Spleen (tissue), 13 donors: ENCODE measurements at regions of chr3 and their contacts with region 1.

Region 1: GRCh38 chr3:179318876-179319275 is 4.0 kb upstream of the ZNF639 start:
- DNase-seq: no peak
- H3K4me3 ChIP-seq: no peak overlapping the region
- H3K27ac ChIP-seq: no peak overlapping the region
- H3K4me1 ChIP-seq: peaks cover 4 to 39% (median 18%) of the 10 kb centered on the region in 6 donors
- H3K27me3 ChIP-seq: no peaks in the 10 kb centered on the region
- CTCF ChIP-seq: no peak
- POLR2A ChIP-seq: no peak

Region 2: DNA sequence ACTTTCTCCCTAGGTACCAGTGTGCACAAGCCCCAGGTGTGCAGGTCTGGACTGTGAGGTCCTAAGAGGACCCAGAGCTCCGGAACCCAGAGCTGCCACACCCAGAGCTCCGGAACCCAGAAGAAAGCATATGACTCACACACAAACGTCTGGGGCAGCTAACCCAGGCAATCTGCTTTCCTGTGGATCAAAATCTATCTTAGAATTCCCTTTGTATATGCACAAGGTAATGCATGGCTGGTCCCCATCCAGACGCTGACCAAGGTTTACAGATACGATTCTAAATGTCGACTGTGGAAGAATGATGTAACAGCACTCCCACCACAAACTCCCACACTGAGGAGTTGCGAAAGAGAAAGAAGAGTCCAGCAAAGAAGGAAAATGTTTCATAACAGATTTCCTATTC is 767.0 kb before region 1 on chr3:
- intact Hi-C with region 1: no loop called
- DNase-seq: no peak
- H3K4me3 ChIP-seq: no peak overlapping the region
- H3K27ac ChIP-seq: no peak overlapping the region
- H3K4me1 ChIP-seq: no peaks in the 10 kb centered on the region
- H3K27me3 ChIP-seq: no peaks in the 10 kb centered on the region
- CTCF ChIP-seq: no peak
- POLR2A ChIP-seq: no peak

Region 3: GRCh38 chr3:179147873-179148615 is 170.8 kb before region 1 on chr3 and contains the start of gene PIK3CA:
- intact Hi-C with region 1: loop called (anchors 5 kb)
- DNase-seq: peak; percentile 97
- H3K4me3 ChIP-seq: peak within 1 kb of the TSS; percentile 71 to 91 (median 83)
- H3K27ac ChIP-seq: peak within 1 kb of the TSS; percentile 96 to 100 (median 100)
- H3K4me1 ChIP-seq: peaks cover 4 to 48% (median 42%) of the 10 kb centered on the region in 6 donors
- H3K27me3 ChIP-seq: no peaks in the 10 kb centered on the region
- CTCF ChIP-seq: no peak
- POLR2A ChIP-seq: peak; percentile 43 to 88 (median 64)
- total RNA-seq, gene PIK3CA: 28.3 to 40.2 (median 32.0) TPM

Region 4: DNA sequence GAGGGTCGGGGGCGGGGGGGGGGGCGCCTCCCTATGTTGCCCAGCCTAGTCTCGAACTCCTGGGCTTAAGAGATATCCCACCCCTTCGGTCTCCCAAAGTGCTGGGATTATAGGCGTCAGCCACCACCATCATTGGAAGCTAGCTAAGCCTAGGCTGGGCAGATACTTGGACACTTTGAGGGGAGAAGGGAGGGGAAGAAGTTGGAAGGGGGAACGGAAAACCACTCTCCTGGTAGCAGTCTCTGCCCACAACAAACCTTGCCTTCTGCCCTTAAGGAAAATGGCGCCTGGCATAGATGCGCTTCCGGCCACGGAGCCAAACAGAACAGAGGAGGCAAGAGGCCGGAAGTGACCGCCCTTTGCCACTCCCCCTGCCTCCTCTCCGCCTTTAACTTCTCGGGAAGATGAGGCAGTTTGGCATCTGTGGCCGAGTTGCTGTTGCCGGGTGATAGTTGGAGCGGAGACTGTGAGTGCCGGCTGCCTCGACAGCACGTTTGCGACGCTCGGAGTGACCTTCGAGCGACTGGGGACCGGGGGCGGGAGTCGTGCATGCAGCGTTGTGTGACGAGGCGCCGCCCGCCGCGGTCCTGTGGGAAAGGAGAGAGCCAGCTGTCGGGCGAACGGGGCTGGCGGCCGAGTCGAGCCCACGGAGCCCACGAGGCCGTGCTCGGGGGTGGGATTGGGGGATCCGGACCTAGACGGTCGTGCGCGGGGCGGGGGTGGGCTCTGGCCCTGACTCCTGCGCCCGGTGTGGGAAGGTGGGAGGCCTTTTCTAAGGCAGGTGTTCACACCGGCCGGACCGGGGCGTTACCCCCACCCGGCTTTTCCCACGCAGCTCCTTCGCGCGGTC is 28.7 kb after region 1 on chr3 and contains the start of gene MFN1:
- intact Hi-C with region 1: no loop called
- DNase-seq: peak; percentile 97
- H3K4me3 ChIP-seq: peak within 1 kb of the TSS; percentile 69 to 98 (median 93)
- H3K27ac ChIP-seq: peak within 1 kb of the TSS; percentile 73 to 95 (median 88)
- H3K4me1 ChIP-seq: peaks cover 17 to 56% (median 34%) of the 10 kb centered on the region in 6 donors
- H3K27me3 ChIP-seq: no peaks in the 10 kb centered on the region
- CTCF ChIP-seq: peak in 1 of 11 experiments; percentile 18
- POLR2A ChIP-seq: peak in 2 of 3 donors; percentile 10 to 33
- total RNA-seq, gene MFN1: 43.7 to 74.4 (median 64.1) TPM

Region 5: GRCh38 chr3:179967622-179968021 is 648.7 kb after region 1 on chr3:
- intact Hi-C with region 1: no loop called
- DNase-seq: no peak
- H3K4me3 ChIP-seq: no peak overlapping the region
- H3K27ac ChIP-seq: no peak overlapping the region
- H3K4me1 ChIP-seq: no peaks in the 10 kb centered on the region
- H3K27me3 ChIP-seq: peaks cover 0 to 24% (median 0%) of the 10 kb centered on the region in 7 donors
- CTCF ChIP-seq: no peak
- POLR2A ChIP-seq: no peak